ENCODE measurements at regions of chr5 and their contacts with region 1.

Region 1: DNA sequence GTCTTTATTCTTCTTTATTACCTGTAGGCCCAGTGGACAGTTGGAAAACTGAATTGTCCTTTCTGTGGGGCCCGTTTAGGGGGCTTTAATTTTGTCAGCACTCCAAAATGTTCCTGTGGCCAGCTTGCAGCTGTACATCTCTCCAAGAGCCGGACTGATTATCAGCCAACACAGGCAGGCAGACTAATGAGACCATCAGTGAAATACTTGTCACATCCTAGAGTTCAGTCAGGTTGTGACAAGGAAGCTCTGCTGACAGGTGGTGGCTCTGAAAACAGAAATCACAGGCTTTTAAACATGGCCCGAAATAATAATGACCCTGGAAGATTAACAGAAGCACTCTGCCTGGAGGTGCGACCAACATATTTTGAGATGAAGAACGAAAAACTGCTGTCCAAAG is 47.9 kb downstream of the RNF180 start:
- DNase-seq: no peak
- ATAC-seq: no peak
- H3K4me3 Mint-ChIP-seq: no peak overlapping the region
- H3K27ac Mint-ChIP-seq: no peak overlapping the region
- H3K4me1 Mint-ChIP-seq: no peaks in the 10 kb centered on the region
- H3K27me3 Mint-ChIP-seq: peaks cover 2% of the 10 kb centered on the region
- CTCF ChIP-seq: no peak

Region 2: GRCh38 chr5:64229163-64229774 is 15.7 kb after region 1 on chr5:
- CTCF ChIA-PET with region 1: interaction called, 13 read pairs
- POLR2A ChIA-PET with region 1: no interaction called
- intact Hi-C with region 1: no loop called
- DNase-seq: no peak
- ATAC-seq: no peak
- H3K4me3 Mint-ChIP-seq: no peak overlapping the region
- H3K27ac Mint-ChIP-seq: no peak overlapping the region
- H3K4me1 Mint-ChIP-seq: no peaks in the 10 kb centered on the region
- H3K27me3 Mint-ChIP-seq: no peaks in the 10 kb centered on the region
- CTCF ChIP-seq: peak; percentile 77

Measured in activated CD8-positive, alpha-beta T cell treated with anti-CD3 and anti-CD28 coated beads for 36 hours (primary cell).